Activated naive CD4-positive, alpha-beta T cell treated with anti-CD3 and anti-CD28 coated beads, Interleukin-2, amount 10 ng/mL, durations not matched to agents 7 days and 5 days (primary cell): ENCODE measurements at regions of chr7 and their contacts with region 1.

Region 1: GRCh38 chr7:3065724-3066143 is 22.1 kb upstream of the CARD11 start:
- DNase-seq: peak; percentile 74
- H3K4me3 Mint-ChIP-seq: no peak overlapping the region
- H3K27ac Mint-ChIP-seq: peak overlapping the region; percentile 74
- H3K4me1 Mint-ChIP-seq: peaks cover 81% of the 10 kb centered on the region
- H3K27me3 Mint-ChIP-seq: peaks cover 8% of the 10 kb centered on the region

Region 2: DNA sequence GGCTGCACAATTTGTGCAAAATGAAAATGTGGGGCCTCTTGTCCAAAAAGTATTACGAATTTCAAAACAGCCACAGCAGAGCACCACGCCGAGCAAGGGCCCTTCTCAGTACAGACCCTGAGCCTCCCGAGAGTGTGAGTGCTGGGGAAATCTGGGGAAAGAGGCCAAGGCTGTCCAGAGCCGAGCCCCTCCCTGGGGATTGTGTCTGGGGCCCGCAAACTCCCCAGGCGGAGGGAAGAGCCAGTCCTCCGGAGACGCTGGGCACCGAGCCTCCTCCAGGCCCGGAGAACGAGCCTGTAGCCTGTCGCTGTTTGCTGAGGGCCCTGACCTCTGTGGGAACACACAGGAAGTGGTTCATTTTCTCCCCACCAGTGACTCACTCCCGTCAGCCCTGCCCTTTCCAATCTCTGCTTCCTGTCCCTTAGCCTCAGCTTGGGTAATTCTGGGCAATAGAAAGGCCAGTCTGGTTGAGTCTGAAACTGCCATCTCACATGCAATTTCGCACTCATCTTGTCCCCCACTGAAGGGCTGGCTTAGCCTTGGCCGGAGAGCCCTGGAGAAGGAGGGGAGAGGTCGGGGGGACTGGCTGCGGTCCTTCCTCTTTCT is 202.2 kb before region 1 on chr7:
- CTCF ChIA-PET with region 1: interaction called, 13 read pairs
- DNase-seq: peak; percentile 82
- H3K4me3 Mint-ChIP-seq: peak overlapping the region; percentile 39
- H3K27ac Mint-ChIP-seq: peak overlapping the region; percentile 86
- H3K4me1 Mint-ChIP-seq: peaks cover 29% of the 10 kb centered on the region
- H3K27me3 Mint-ChIP-seq: no peaks in the 10 kb centered on the region

Region 3: GRCh38 chr7:3042861-3043489 is 22.8 kb before region 1 on chr7:
- CTCF ChIA-PET with region 1: interaction called, 10 read pairs
- DNase-seq: peak; percentile 86
- H3K4me3 Mint-ChIP-seq: peak overlapping the region; percentile 90
- H3K27ac Mint-ChIP-seq: peak overlapping the region; percentile 93
- H3K4me1 Mint-ChIP-seq: peaks cover 60% of the 10 kb centered on the region
- H3K27me3 Mint-ChIP-seq: no peaks in the 10 kb centered on the region

Region 4: DNA sequence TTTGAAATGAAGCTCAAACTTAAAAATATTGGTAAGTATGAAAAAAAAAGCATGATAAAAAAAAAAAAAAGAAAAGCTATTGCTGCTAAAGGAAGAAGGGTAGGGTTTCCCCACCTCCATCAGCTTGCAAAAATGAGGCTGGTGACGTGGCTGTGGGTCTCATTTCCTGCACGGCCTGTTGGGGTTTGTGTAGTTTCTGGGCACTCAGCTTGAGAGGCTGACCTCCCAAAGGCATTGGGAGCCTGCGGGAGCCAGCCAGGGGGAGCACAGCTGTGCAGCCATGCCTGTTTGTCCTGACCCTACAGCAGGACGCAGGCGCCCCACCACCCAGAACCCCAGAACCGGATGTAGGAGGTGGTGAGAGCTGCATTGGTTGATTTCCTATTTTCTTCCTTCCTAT is 26.7 kb after region 1 on chr7:
- CTCF ChIA-PET with region 1: interaction called, 68 read pairs
- DNase-seq: peak; percentile 86
- H3K4me3 Mint-ChIP-seq: peak overlapping the region; percentile 58
- H3K27ac Mint-ChIP-seq: peak overlapping the region; percentile 97
- H3K4me1 Mint-ChIP-seq: peaks cover 73% of the 10 kb centered on the region
- H3K27me3 Mint-ChIP-seq: peaks cover 3% of the 10 kb centered on the region

Region 5: DNA sequence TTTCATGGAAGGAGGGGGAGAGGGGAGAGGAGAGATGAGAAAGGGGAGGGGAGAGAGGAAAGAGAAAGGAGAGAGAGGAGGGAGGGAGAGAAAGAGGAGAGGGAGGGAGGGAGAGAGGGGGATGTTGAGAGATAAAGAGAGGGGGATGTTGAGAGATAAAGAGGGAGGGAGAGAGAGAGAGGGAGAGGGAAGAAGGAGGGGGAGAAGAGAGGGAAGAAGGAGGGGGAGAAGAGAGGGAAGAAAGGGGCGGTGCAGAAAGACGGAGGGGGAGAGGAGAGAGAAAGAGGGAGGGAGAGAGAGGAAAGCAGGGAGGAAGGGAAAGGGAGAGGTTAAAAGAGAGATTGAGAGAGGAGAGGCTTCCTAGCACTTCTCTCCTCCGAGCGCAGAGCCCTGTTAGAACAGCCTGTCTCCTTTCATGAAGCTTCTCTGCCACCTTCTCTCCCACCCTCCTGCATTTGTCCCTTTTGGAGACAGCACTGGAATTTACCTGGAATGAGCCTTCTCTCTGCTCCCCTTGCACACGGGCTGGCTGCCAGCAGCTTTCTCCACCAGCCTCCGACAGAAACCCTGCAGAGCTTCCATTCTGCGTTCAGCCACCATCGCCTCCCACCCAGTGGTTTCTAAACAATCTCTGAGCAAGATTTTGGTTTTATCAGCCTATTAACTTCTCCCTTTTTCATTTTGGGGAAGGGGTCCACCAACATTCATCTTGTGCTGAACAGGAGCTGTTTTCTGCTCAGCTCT is 51.9 kb after region 1 on chr7:
- CTCF ChIA-PET with region 1: interaction called, 39 read pairs
- DNase-seq: peak; percentile 57
- H3K4me3 Mint-ChIP-seq: peak overlapping the region; percentile 70
- H3K27ac Mint-ChIP-seq: peak overlapping the region; percentile 89
- H3K4me1 Mint-ChIP-seq: peaks cover 86% of the 10 kb centered on the region
- H3K27me3 Mint-ChIP-seq: peaks cover 13% of the 10 kb centered on the region

Region 6: DNA sequence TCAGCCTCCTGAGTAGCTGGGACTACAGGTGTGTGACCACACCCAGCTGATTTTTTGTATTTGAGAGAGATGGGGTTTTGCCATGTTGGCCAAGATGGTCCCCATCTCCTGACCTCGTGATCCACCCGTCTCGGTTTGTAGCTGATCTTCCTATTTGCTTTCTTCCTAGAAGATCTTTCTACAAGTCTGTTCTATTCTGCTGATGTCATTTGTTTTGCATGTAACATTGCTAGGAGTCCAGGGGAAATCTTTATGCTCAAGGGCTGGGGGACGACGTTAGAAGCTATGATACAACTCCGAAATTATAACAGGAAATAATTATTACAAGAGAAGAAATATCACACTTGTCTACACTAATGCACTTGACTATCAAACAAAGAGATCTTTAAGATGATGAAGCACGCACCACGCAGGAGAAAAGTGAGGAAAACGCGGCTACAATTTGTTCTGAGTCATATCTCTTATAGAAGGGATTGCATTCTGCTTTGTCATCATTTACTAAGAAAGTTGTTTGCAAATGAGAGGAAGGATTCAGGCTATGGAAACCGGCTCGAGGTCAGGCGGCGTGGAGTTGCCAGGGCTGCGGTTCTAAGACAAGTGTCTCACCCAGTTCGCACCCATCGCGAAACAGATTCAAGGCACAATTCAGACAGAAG is 81.0 kb after region 1 on chr7:
- CTCF ChIA-PET with region 1: interaction called, 11 read pairs
- DNase-seq: no peak
- H3K4me3 Mint-ChIP-seq: no peak overlapping the region
- H3K27ac Mint-ChIP-seq: no peak overlapping the region
- H3K4me1 Mint-ChIP-seq: peaks cover 6% of the 10 kb centered on the region
- H3K27me3 Mint-ChIP-seq: peaks cover 20% of the 10 kb centered on the region

Region 7: GRCh38 chr7:3154912-3155494 is 89.3 kb after region 1 on chr7:
- CTCF ChIA-PET with region 1: interaction called, 42 read pairs
- DNase-seq: peak; percentile 71
- H3K4me3 Mint-ChIP-seq: no peak overlapping the region
- H3K27ac Mint-ChIP-seq: no peak overlapping the region
- H3K4me1 Mint-ChIP-seq: peaks cover 19% of the 10 kb centered on the region
- H3K27me3 Mint-ChIP-seq: peaks cover 29% of the 10 kb centered on the region

Region 8: DNA sequence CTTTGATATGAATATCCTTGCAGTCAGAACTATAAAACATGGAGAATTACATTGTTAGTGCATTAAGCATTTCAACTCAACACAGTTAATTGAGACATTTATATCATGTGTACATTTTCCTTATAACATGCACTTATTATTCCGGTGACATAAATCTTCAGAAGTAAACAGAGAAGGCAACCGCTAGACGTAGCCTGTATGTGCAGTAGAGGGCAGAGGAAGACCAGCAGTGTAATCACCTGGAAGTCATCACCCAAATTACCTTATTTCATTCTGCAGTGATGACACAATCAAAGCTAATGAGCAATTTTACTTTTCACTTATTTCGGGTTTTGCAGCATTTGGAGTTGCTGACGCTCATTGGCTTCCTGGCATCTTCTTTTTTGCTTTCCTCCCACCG is 629.9 kb after region 1 on chr7:
- CTCF ChIA-PET with region 1: no interaction called
- DNase-seq: no peak
- H3K4me3 Mint-ChIP-seq: no peak overlapping the region
- H3K27ac Mint-ChIP-seq: no peak overlapping the region
- H3K4me1 Mint-ChIP-seq: peaks cover 10% of the 10 kb centered on the region
- H3K27me3 Mint-ChIP-seq: no peaks in the 10 kb centered on the region